ENCODE measurements at regions of chr6 and their contacts with region 1.

Region 1: GRCh38 chr6:36027501-36028087 is at the start of gene MAPK14:
- DNase-seq: peak; percentile 100
- ATAC-seq: peak; percentile 94
- H3K4me3 ChIP-seq: peak within 1 kb of the TSS; percentile 79 to 91 (median 87)
- H3K4me3 Mint-ChIP-seq: peak within 1 kb of the TSS; percentile 96
- H3K27ac ChIP-seq: peak within 1 kb of the TSS; percentile 61 to 64
- H3K27ac Mint-ChIP-seq: peak within 1 kb of the TSS; percentile 94
- H3K4me1 ChIP-seq: peaks cover 29 to 35% of the 10 kb centered on the region in 2 donors
- H3K4me1 Mint-ChIP-seq: peaks cover 38% of the 10 kb centered on the region
- H3K27me3 ChIP-seq: peaks cover 0 to 19% (median 16%) of the 10 kb centered on the region in 4 experiments
- H3K27me3 Mint-ChIP-seq: peaks cover 20% of the 10 kb centered on the region
- CTCF ChIP-seq: peak; percentile 86
- total RNA-seq, gene MAPK14: 49.9 and 50.4 TPM in 2 replicates

Region 2: GRCh38 chr6:35920793-35921732 is 106.5 kb before region 1 on chr6 and contains the start of gene SRPK1:
- CTCF ChIA-PET with region 1: no interaction called
- POLR2A ChIA-PET with region 1: no interaction called
- intact Hi-C with region 1: loop called (anchors 1 kb)
- DNase-seq: peak; percentile 91
- ATAC-seq: peak; percentile 87
- H3K4me3 ChIP-seq: peak within 1 kb of the TSS; percentile 68 to 95 (median 82)
- H3K4me3 Mint-ChIP-seq: peak within 1 kb of the TSS; percentile 96
- H3K27ac ChIP-seq: peak within 1 kb of the TSS; percentile 26 to 62
- H3K27ac Mint-ChIP-seq: peak within 1 kb of the TSS; percentile 88
- H3K4me1 ChIP-seq: peaks cover 19 to 25% of the 10 kb centered on the region in 2 donors
- H3K4me1 Mint-ChIP-seq: peaks cover 29% of the 10 kb centered on the region
- H3K27me3 ChIP-seq: no peaks in the 10 kb centered on the region
- H3K27me3 Mint-ChIP-seq: no peaks in the 10 kb centered on the region
- CTCF ChIP-seq: no peak
- total RNA-seq, gene SRPK1: 53.3 and 61.9 TPM in 2 replicates

Region 3: DNA sequence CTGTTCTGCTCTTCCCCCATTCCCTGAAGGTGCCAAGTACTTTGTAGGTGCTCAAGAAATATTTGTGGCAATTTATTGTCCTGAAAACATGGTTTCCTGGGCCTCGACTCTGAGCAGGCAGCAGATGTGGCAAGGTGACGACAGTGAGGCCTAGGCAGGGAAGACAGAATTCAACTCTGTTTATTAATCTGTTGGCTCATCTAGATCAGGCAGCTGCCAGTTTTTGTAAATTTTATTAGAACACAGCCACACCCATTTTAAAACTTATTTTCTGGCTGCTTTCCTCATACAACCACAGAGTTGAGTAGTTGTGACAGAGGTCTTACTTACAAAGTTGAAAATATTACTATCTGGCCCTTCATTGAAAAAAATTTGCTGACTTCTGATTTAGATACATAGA is 24.5 kb after region 1 on chr6:
- CTCF ChIA-PET with region 1: interaction called, 24 read pairs
- POLR2A ChIA-PET with region 1: no interaction called
- intact Hi-C with region 1: no loop called
- DNase-seq: no peak
- ATAC-seq: no peak
- H3K4me3 ChIP-seq: no peak overlapping the region
- H3K4me3 Mint-ChIP-seq: no peak overlapping the region
- H3K27ac ChIP-seq: no peak overlapping the region
- H3K27ac Mint-ChIP-seq: no peak overlapping the region
- H3K4me1 ChIP-seq: peaks cover 18 to 21% of the 10 kb centered on the region in 2 donors
- H3K4me1 Mint-ChIP-seq: peaks cover 4% of the 10 kb centered on the region
- H3K27me3 ChIP-seq: no peaks in the 10 kb centered on the region
- H3K27me3 Mint-ChIP-seq: no peaks in the 10 kb centered on the region
- CTCF ChIP-seq: no peak

Region 4: GRCh38 chr6:36139429-36139828 is 111.8 kb after region 1 on chr6:
- CTCF ChIA-PET with region 1: no interaction called
- POLR2A ChIA-PET with region 1: no interaction called
- intact Hi-C with region 1: no loop called
- DNase-seq: no peak
- ATAC-seq: no peak
- H3K4me3 ChIP-seq: no peak overlapping the region
- H3K4me3 Mint-ChIP-seq: no peak overlapping the region
- H3K27ac ChIP-seq: no peak overlapping the region
- H3K27ac Mint-ChIP-seq: no peak overlapping the region
- H3K4me1 ChIP-seq: peaks cover 14 to 16% of the 10 kb centered on the region in 2 donors
- H3K4me1 Mint-ChIP-seq: peaks cover 21% of the 10 kb centered on the region
- H3K27me3 ChIP-seq: no peaks in the 10 kb centered on the region
- H3K27me3 Mint-ChIP-seq: no peaks in the 10 kb centered on the region
- CTCF ChIP-seq: no peak

Region 5: DNA sequence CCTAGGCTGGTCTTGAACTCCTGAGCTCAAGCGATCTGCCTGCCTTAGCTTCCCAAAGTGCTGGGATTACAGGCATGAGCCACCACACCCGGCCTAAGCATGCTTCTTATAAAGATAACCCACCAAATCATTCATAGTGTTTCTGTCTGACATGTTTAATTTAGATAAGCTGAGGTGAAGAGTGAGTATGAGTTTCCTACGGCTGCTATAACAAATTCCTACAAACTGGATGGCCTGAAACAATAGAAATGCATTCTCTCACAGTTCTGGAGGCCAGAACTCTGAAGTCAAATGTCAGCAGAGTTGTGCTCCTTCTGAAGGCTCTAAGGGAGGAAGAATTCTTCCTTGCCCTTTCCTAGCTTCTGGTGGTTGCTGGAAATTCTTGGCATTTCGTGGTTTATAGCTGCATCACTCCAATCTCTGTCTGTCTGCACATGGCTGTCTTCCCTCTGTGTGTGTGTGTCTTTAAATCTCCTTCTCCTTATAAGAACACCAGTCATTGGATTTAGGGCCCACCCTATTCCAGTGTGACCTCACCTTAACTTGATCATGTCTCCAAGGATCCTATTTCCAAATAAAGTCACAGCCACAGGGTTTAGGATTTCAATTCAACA is 132.7 kb after region 1 on chr6:
- CTCF ChIA-PET with region 1: no interaction called
- POLR2A ChIA-PET with region 1: no interaction called
- intact Hi-C with region 1: no loop called
- DNase-seq: no peak
- ATAC-seq: no peak
- H3K4me3 ChIP-seq: no peak overlapping the region
- H3K4me3 Mint-ChIP-seq: no peak overlapping the region
- H3K27ac ChIP-seq: no peak overlapping the region
- H3K27ac Mint-ChIP-seq: no peak overlapping the region
- H3K4me1 ChIP-seq: no peaks in the 10 kb centered on the region
- H3K4me1 Mint-ChIP-seq: no peaks in the 10 kb centered on the region
- H3K27me3 ChIP-seq: no peaks in the 10 kb centered on the region
- H3K27me3 Mint-ChIP-seq: no peaks in the 10 kb centered on the region
- CTCF ChIP-seq: no peak

Region 6: GRCh38 chr6:36196880-36197548 is 169.4 kb after region 1 on chr6:
- CTCF ChIA-PET with region 1: interaction called, 13 read pairs
- POLR2A ChIA-PET with region 1: interaction called, 5 read pairs
- intact Hi-C with region 1: loop called (anchors 1 kb)
- DNase-seq: peak; percentile 98
- ATAC-seq: peak; percentile 90
- H3K4me3 ChIP-seq: peak overlapping the region; percentile 17 to 84 (median 62)
- H3K4me3 Mint-ChIP-seq: peak overlapping the region; percentile 94
- H3K27ac ChIP-seq: peak overlapping the region; percentile 78 to 79
- H3K27ac Mint-ChIP-seq: peak overlapping the region; percentile 96
- H3K4me1 ChIP-seq: peaks cover 21 to 22% of the 10 kb centered on the region in 2 donors
- H3K4me1 Mint-ChIP-seq: peaks cover 36% of the 10 kb centered on the region
- H3K27me3 ChIP-seq: no peaks in the 10 kb centered on the region
- H3K27me3 Mint-ChIP-seq: no peaks in the 10 kb centered on the region
- CTCF ChIP-seq: no peak

Region 7: DNA sequence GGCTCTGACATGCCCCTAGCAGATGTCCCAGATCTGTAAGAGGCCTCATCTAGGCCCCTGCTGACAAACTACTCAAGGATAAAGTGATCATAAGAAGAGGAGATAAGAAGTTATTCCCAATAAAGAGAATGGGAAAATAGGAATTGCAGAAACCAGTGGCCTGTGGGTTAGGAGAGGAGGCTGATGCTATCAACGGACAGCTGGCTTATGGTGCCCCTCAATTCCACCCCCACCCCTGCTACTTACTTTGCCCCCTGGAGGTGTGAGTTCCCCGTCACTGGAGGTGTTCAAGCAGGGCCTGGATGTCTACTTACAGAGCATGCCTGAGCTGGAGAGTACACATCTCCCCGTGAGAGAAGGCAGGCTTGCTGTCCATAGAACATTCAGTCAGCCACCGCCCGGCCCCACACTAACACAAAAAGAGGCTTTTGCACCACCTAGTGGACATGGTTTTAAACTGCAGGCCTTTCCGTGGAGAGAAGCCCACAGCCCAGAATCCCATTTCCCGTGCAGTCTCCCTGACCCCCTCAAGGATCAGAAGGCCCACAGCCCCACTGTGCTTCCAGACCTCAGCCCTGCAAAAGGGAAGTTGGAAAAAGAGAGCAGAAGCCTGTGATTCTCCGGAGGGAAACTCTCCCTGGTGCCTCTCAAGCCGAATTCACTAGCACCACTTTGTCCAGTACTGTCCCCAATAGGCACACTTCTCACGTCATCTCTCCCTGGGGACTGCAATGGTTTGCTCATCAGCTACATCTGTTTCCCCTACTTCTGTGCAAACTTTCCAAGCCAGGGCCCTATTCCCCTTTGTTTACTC is 332.9 kb after region 1 on chr6:
- CTCF ChIA-PET with region 1: interaction called, 43 read pairs
- POLR2A ChIA-PET with region 1: interaction called, 3 read pairs
- intact Hi-C with region 1: loop called (anchors 1 kb)
- DNase-seq: peak; percentile 82
- ATAC-seq: peak; percentile 83
- H3K4me3 ChIP-seq: no peak overlapping the region
- H3K4me3 Mint-ChIP-seq: no peak overlapping the region
- H3K27ac ChIP-seq: no peak overlapping the region
- H3K27ac Mint-ChIP-seq: no peak overlapping the region
- H3K4me1 ChIP-seq: peaks cover 20 to 33% of the 10 kb centered on the region in 2 donors
- H3K4me1 Mint-ChIP-seq: peaks cover 29% of the 10 kb centered on the region
- H3K27me3 ChIP-seq: no peaks in the 10 kb centered on the region
- H3K27me3 Mint-ChIP-seq: no peaks in the 10 kb centered on the region
- CTCF ChIP-seq: peak; percentile 83

Measured in B cell (primary cell).